Keratinocyte (primary cell): ENCODE measurements at regions of chr12 and their contacts with region 1.

Region 1: DNA sequence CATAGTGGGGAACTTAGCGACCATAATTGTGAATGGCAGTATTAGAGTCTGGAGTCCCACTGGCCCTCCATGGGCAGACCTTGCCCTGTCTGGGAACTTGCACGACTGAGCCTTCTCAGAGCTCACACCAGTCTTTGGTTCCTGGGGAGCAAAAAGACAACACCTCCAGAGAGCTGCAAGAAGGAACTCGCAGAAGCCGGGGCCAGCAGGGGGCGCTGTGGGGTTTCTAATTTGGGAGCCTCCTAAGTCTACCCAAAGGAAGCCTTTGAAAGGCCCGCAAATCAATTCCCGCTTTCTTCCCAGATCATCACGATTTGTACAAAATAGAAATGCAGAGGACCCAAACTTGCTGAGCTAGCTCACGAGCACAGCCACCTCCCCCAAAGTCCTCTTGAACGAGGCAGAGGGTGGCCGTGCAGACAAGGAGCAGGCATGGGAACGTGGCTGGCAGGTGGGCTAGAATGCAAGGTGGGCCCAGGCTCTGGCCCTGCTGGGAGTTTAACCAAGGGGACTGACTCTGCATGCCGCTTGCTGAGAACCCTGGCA is 46.3 kb upstream of the FBXO21 start:
- DNase-seq: peak; percentile 35
- H3K4me3 ChIP-seq: no peak overlapping the region
- H3K27ac ChIP-seq: no peak overlapping the region
- H3K4me1 ChIP-seq: no peaks in the 10 kb centered on the region
- H3K27me3 ChIP-seq: no peaks in the 10 kb centered on the region
- CTCF ChIP-seq: peak; percentile 61 to 85 (median 79)

Region 2: DNA sequence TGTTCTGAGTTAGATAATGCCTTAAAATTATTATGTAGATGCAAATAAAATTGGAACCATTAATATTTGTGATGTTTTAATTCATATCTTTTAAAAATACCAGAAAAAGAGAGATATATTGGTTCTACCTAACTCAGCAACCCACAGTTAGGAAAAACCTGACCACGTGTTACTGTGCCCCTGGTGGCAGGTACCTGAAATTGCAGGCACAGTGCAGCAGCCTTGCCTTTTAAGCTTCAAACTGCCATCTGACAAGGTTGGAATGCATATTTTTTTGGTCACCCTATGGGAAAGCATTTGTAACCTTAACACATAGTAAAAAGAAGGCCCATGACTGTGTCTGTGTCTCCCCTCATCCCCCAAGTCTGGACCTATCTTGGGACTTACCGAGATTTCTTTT is 234.3 kb after region 1 on chr12:
- dilution Hi-C with region 1: no loop called
- DNase-seq: no peak
- H3K4me3 ChIP-seq: no peak overlapping the region
- H3K27ac ChIP-seq: no peak overlapping the region
- H3K4me1 ChIP-seq: no peaks in the 10 kb centered on the region
- H3K27me3 ChIP-seq: no peaks in the 10 kb centered on the region
- CTCF ChIP-seq: peak; percentile 43 to 58 (median 57)

Region 3: GRCh38 chr12:117587631-117588287 is 351.2 kb after region 1 on chr12:
- dilution Hi-C with region 1: loop called (anchors 10 kb)
- DNase-seq: no peak
- H3K4me3 ChIP-seq: no peak overlapping the region
- H3K27ac ChIP-seq: no peak overlapping the region
- H3K4me1 ChIP-seq: no peaks in the 10 kb centered on the region
- H3K27me3 ChIP-seq: peaks cover 8% of the 10 kb centered on the region
- CTCF ChIP-seq: peak; percentile 84 to 98 (median 91)

Region 4: DNA sequence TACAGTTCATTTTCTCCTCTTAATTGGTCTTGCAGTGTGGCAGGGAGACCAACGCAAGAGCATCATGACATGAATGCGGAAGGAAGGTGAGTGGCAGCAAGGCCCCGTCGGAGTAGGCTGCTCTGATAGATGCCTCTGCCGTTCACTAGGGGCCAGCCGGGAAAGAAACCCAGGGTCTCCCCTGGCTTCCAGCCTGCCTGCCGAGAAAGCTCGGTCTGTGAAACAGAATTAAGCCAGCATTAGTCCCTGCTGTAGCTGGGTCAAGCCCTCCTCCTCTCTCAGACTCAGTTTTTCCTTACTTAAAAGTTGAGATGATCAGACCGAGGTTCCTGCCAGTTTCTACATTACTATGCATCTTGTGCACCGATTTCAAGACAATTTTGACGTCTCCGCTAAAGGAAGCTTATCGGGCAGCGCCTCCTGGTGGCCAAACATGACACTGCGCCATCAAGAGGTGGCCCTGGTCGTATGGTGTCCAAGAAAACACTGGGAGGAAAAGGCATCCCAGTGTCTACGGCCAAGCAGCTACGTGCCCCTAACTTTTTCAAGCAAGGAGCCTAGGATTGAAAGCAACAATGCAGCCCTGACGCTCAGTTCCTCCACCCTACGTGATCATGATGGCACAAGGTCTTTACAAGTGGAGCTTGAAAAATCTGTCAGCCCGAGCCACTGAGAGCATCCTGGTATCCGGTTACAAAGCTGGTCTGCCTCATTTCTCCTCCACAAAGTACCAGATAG is 600.6 kb after region 1 on chr12:
- dilution Hi-C with region 1: loop called (anchors 10 kb)
- DNase-seq: no peak
- H3K4me3 ChIP-seq: no peak overlapping the region
- H3K27ac ChIP-seq: no peak overlapping the region
- H3K4me1 ChIP-seq: peaks cover 2% of the 10 kb centered on the region
- H3K27me3 ChIP-seq: peaks cover 4% of the 10 kb centered on the region
- CTCF ChIP-seq: peak; percentile 97 to 99 (median 97)